ENCODE measurements at regions of chr11 and their contacts with region 1.

Region 1: DNA sequence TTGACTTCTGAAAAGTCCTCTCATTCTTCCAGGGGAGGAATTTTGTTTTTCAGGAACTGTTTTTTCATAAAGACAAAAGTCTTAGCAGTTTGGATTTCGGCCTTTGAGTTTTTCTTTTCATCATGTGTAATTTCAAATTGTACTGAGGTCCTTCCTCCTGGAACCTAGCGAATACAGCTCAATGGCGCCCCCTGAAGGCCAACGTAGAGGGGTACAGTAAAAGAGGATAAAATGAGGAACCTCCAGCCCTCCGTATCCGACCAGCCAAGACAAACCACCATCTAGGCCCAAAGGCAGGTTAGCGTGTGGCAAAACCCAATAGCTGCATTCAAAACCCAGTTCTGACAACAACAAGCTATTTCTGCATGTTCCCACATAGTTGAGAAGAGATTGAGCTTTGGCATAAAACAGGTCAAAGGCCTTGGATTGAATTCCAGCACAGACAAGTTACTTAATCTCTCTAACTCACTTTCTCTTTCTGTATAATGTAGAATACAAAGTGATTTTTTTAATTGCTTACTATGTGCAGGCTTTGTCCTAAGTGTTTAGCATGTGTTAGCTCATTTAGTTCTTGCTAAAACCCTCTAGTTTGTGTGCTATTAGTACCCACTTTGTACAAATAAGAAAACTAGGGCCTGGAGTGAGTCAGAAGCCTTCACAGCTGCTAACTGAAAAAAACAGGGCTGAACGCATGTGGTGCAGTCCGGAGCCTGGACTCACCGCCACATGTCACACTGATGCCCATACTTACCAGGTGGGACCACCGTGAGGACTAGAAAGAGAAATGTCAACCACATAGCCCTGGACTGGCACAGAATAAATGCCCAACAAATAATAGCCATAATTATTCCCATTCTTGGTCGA is 43.2 kb upstream of the ETS1 start:
- DNase-seq: peak; percentile 86
- ATAC-seq: peak; percentile 96
- H3K4me3 ChIP-seq: no peak overlapping the region
- H3K27ac ChIP-seq: no peak overlapping the region
- H3K4me1 ChIP-seq: no peaks in the 10 kb centered on the region
- H3K27me3 ChIP-seq: peaks cover 4% of the 10 kb centered on the region
- CTCF ChIP-seq: peak; percentile 97
- POLR2A ChIP-seq: no peak
- RAD21 ChIP-seq: peak; percentile 97

Region 2: DNA sequence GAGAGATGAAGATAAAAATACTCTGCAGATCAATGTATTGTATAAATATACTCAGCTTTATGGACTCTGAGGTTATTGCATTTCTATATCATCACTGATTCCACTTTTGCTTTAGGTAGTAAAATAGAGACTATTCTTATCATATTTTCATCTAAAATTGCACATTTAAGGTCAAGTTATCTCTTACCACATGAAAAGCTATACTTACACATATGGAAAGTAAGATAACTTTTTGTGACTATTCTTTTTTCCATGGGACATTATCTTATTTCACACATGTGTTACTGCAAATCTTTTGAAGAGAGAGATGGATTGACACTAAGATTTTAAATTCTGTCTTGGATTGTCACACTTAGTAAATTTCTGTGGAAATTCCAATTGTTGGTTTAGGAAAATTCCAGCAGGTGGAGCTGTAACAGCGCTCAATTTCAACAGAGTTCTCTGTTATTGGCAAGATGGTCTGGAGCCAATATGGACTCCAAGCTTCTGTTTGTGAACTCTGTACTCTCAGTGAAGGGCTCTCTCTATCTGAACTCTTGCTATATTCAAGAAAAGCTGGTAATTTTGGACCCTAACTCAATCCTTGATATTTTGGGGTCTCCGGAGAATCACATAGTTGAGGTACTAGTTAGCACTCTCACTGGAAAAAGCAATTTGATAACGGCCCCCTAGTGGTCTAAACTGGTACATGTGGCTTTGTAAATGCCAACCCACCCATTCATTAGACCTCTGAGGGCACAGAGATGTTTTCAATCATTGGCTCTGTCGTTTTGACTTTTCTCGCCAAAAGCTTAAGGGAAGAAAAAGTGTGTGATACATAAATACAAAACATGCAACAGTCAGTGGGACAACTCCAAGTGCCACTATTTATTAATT is 472.9 kb before region 1 on chr11:
- CTCF ChIA-PET with region 1: interaction called, 6 read pairs
- POLR2A ChIA-PET with region 1: no interaction called
- dilution Hi-C with region 1: loop called (anchors 25 kb)
- in situ Hi-C with region 1: no loop called
- intact Hi-C with region 1: loop called (anchors 5 kb)
- DNase-seq: peak; percentile 78
- ATAC-seq: peak; percentile 94
- H3K4me3 ChIP-seq: peak overlapping the region; percentile 41; the same call in 1 of the 2 replicates
- H3K27ac ChIP-seq: no peak overlapping the region
- H3K4me1 ChIP-seq: no peaks in the 10 kb centered on the region
- H3K27me3 ChIP-seq: peaks cover 31% of the 10 kb centered on the region
- CTCF ChIP-seq: peak; percentile 67
- POLR2A ChIP-seq: no peak
- RAD21 ChIP-seq: peak; percentile 72

Region 3: GRCh38 chr11:128290106-128290840 is 340.3 kb before region 1 on chr11:
- CTCF ChIA-PET with region 1: interaction called, 9 read pairs
- POLR2A ChIA-PET with region 1: no interaction called
- dilution Hi-C with region 1: no loop called
- in situ Hi-C with region 1: loop called (anchors 5 kb)
- intact Hi-C with region 1: loop called (anchors 1 kb)
- DNase-seq: peak; percentile 95
- ATAC-seq: peak; percentile 95
- H3K4me3 ChIP-seq: no peak overlapping the region
- H3K27ac ChIP-seq: no peak overlapping the region
- H3K4me1 ChIP-seq: peaks cover 14% of the 10 kb centered on the region
- H3K27me3 ChIP-seq: peaks cover 1% of the 10 kb centered on the region; the same call in 1 of the 2 replicates
- CTCF ChIP-seq: peak; percentile 89
- POLR2A ChIP-seq: peak; percentile 46; the same call in 1 of the 2 replicates
- RAD21 ChIP-seq: peak; percentile 99

Region 4: DNA sequence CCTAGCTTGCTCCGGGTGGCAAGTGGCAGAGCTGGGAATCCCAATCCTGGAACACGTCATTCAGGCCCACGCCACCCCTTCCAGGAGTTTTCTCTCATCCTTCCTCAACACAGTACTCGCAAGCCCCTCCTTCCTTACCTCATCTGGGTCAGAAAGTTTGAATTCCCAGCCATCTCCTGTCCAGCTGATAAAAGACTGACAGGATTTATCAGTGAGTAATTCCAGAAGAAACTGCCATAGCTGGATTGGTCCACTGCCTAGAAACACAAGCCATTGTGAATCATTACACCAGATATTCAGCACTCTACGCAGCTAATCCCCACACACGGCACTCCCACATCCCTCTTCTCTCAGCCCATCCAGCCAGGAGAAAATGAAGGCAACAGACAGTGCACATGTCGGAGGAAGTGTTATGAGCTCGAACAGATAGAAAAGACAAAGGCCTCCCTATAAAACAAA is 167.2 kb before region 1 on chr11:
- CTCF ChIA-PET with region 1: interaction called, 3 read pairs
- POLR2A ChIA-PET with region 1: no interaction called
- dilution Hi-C with region 1: no loop called
- in situ Hi-C with region 1: no loop called
- intact Hi-C with region 1: loop called (anchors 1 kb)
- DNase-seq: peak; percentile 99
- ATAC-seq: peak; percentile 75
- H3K4me3 ChIP-seq: no peak overlapping the region
- H3K27ac ChIP-seq: peak overlapping the region; percentile 4; the same call in 1 of the 2 replicates
- H3K4me1 ChIP-seq: peaks cover 20% of the 10 kb centered on the region
- H3K27me3 ChIP-seq: no peaks in the 10 kb centered on the region
- CTCF ChIP-seq: no peak
- POLR2A ChIP-seq: peak; percentile 67
- RAD21 ChIP-seq: no peak

Region 5: GRCh38 chr11:128806506-128807261 is 176.1 kb after region 1 on chr11:
- CTCF ChIA-PET with region 1: no interaction called
- POLR2A ChIA-PET with region 1: no interaction called
- dilution Hi-C with region 1: no loop called
- in situ Hi-C with region 1: no loop called
- intact Hi-C with region 1: no loop called
- DNase-seq: peak; percentile 82
- ATAC-seq: peak; percentile 71
- H3K4me3 ChIP-seq: no peak overlapping the region
- H3K27ac ChIP-seq: no peak overlapping the region
- H3K4me1 ChIP-seq: peaks cover 19% of the 10 kb centered on the region
- H3K27me3 ChIP-seq: no peaks in the 10 kb centered on the region
- CTCF ChIP-seq: no peak
- POLR2A ChIP-seq: no peak
- RAD21 ChIP-seq: 0 out of 2 replicates have a peak, but pooled peaks have one; percentile 1

Region 6: DNA sequence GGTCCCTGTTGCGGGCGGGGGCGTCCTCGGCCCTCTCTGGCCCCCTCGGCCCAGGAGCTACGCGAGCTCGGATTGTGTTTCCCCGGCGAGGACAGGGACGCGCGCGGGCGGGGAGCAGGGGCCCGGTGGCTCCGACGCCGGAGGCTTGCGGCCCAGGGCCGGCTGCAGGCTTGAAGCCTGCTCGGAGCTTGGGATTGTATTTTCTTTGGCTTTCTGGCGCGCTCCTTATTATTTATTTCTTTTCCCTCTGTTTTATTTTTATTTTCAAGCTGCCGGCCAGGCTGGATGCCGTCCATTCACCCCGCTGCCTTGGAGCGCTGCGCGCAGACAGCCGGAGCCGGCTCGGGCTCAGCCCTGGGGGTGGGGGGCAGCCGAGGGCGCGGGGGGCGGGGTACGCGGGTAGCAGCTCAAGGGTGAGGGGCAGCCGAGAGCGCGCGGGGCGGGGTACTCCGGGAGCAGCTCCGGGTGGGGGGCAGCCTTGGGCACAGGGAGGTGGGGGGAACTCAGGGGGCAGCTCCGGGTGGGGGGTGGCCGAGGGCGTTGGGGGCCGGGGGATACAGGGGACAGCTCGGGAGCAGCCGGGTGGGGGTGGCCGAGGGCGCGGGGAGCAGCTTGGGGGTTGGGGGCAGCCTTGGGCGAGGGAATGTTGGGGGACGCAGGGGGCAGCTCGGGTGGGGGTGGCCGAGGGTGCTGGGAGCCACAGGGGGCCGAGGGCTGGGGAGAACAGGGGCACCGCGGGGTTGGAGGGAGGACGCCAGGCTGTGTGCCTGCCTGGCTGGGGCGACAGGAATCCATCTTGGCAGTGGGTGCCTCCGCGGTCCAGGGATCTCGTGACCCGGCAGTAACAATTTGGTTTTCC is 193.8 kb after region 1 on chr11:
- CTCF ChIA-PET with region 1: interaction called, 7 read pairs
- POLR2A ChIA-PET with region 1: no interaction called
- dilution Hi-C with region 1: no loop called
- in situ Hi-C with region 1: loop called (anchors 5 kb)
- intact Hi-C with region 1: no loop called
- DNase-seq: no peak
- ATAC-seq: peak; percentile 66
- H3K4me3 ChIP-seq: no peak overlapping the region
- H3K27ac ChIP-seq: no peak overlapping the region
- H3K4me1 ChIP-seq: no peaks in the 10 kb centered on the region
- H3K27me3 ChIP-seq: no peaks in the 10 kb centered on the region
- CTCF ChIP-seq: no peak
- POLR2A ChIP-seq: no peak
- RAD21 ChIP-seq: no peak

Region 7: DNA sequence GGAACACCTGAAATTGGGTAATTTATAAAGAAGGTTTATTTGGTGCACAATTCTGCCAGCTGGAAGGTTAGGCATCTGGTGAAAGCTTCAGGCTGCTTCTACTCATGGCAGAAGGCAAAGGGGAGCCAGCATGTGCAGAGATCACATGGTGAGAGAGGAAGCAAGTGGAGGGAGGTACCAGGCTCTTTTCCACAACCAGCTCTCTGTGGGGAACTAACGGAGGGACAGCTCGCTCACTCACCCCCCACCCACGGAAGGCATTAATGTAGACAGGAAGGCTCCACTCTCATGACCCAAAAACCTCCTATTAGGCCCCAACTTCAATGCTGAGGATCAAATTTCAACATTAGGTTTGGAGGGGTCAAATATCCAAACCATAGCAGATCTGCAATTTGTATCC is 637.1 kb after region 1 on chr11:
- CTCF ChIA-PET with region 1: no interaction called
- POLR2A ChIA-PET with region 1: no interaction called
- dilution Hi-C with region 1: no loop called
- in situ Hi-C with region 1: no loop called
- intact Hi-C with region 1: no loop called
- DNase-seq: no peak
- ATAC-seq: no peak
- H3K4me3 ChIP-seq: no peak overlapping the region
- H3K27ac ChIP-seq: no peak overlapping the region
- H3K4me1 ChIP-seq: no peaks in the 10 kb centered on the region
- H3K27me3 ChIP-seq: no peaks in the 10 kb centered on the region
- CTCF ChIP-seq: no peak
- POLR2A ChIP-seq: no peak
- RAD21 ChIP-seq: no peak

Region 8: DNA sequence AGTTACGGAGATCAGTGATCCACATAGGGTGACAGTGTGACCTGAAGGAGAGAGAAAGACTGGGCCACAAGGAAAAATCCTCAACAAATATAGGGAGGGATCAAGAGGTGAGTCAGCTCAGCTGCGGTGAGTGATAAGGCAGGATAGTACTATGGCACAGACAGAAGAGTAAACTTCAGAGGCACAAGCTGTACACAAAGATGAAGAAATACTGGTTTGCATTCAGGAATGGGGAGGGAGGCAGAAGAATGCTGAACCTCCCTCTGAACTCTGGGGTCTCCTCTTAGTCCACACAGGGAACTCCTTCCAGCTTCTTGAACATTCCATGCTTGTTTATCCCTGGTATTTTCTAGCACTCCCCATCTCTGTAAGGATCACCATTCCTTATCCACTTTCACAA is 907.7 kb after region 1 on chr11:
- CTCF ChIA-PET with region 1: no interaction called
- POLR2A ChIA-PET with region 1: no interaction called
- dilution Hi-C with region 1: no loop called
- in situ Hi-C with region 1: no loop called
- intact Hi-C with region 1: no loop called
- DNase-seq: no peak
- ATAC-seq: no peak
- H3K4me3 ChIP-seq: no peak overlapping the region
- H3K27ac ChIP-seq: no peak overlapping the region
- H3K4me1 ChIP-seq: no peaks in the 10 kb centered on the region
- H3K27me3 ChIP-seq: no peaks in the 10 kb centered on the region
- CTCF ChIP-seq: no peak
- POLR2A ChIP-seq: no peak
- RAD21 ChIP-seq: no peak

Measured in IMR-90 (cell line).